Activated B cell treated with CpG ODN at 0.5 μM for 24 hours (primary cell): ENCODE measurements at regions of chr4 and their contacts with region 1.

Region 1: DNA sequence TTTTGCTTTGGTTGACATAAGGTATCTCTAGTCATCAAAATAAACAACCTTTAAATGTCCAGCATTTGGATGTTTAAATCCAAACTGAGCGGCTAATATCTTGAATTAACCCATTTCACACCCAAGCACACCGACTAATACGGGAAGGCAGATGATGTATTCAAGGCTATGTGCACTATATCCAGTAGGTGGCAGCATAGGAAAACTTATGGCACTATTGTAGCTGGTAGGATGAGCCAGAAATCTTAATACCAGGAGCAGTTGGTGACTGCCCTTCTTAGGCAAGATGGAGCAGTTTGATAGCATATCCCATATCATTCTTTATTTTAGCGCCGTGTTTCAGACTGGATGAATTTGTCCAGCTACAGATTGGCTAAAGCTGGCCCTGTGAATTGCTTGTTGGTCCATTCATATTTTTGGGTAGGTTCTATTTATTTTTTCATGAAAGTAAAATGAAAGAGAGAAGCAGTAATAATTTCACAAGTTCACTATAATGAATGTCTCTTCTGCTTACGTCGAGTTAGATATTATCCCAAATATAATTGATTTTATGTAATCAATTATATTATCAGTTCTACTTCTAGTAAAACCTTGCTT is 24.4 kb downstream of the UCHL1 start:
- DNase-seq: no peak
- ATAC-seq: peak; percentile 79
- H3K4me3 Mint-ChIP-seq: no peak overlapping the region
- H3K27ac Mint-ChIP-seq: no peak overlapping the region
- H3K4me1 Mint-ChIP-seq: no peaks in the 10 kb centered on the region
- H3K27me3 Mint-ChIP-seq: peaks cover 9% of the 10 kb centered on the region
- CTCF ChIP-seq: peak; percentile 90

Region 2: GRCh38 chr4:39987485-39987884 is 1293.7 kb before region 1 on chr4:
- CTCF ChIA-PET with region 1: no interaction called
- POLR2A ChIA-PET with region 1: no interaction called
- intact Hi-C with region 1: no loop called
- DNase-seq: no peak
- ATAC-seq: no peak
- H3K4me3 Mint-ChIP-seq: no peak overlapping the region
- H3K27ac Mint-ChIP-seq: no peak overlapping the region
- H3K4me1 Mint-ChIP-seq: no peaks in the 10 kb centered on the region
- H3K27me3 Mint-ChIP-seq: no peaks in the 10 kb centered on the region
- CTCF ChIP-seq: no peak

Region 3: DNA sequence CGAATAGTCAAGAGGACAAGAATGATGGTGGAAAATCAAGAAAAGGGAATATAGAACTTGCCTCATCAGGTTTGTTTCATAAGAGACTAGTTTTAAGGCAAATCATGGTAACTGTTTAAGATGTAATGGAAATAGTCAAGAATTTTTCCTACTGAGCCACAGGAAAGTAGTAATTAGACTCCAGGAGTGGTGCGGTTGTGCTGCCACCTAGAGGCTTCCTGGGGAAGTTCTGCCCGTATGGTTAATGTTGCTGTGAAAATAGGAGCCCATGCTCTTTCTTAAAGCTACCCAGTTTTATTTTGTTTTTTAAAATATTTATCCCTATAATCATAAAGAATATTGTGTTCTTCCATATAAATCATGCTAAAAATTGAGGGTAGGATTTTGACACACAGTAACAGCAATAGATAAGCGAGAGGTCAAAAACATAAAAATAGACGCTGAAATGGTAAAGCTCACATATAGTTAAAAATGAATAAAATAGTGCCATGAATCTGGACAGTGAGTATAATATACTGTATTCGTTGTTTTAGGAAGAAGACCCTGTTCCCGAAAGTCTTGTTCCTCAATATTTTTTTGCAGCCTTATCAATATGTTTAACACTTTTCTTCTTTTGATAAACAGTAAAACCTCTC is 380.4 kb after region 1 on chr4:
- CTCF ChIA-PET with region 1: interaction called, 86 read pairs
- POLR2A ChIA-PET with region 1: no interaction called
- intact Hi-C with region 1: loop called (anchors 1 kb)
- DNase-seq: no peak
- ATAC-seq: no peak
- H3K4me3 Mint-ChIP-seq: no peak overlapping the region
- H3K27ac Mint-ChIP-seq: no peak overlapping the region
- H3K4me1 Mint-ChIP-seq: no peaks in the 10 kb centered on the region
- H3K27me3 Mint-ChIP-seq: peaks cover 1% of the 10 kb centered on the region
- CTCF ChIP-seq: peak; percentile 75

Region 4: DNA sequence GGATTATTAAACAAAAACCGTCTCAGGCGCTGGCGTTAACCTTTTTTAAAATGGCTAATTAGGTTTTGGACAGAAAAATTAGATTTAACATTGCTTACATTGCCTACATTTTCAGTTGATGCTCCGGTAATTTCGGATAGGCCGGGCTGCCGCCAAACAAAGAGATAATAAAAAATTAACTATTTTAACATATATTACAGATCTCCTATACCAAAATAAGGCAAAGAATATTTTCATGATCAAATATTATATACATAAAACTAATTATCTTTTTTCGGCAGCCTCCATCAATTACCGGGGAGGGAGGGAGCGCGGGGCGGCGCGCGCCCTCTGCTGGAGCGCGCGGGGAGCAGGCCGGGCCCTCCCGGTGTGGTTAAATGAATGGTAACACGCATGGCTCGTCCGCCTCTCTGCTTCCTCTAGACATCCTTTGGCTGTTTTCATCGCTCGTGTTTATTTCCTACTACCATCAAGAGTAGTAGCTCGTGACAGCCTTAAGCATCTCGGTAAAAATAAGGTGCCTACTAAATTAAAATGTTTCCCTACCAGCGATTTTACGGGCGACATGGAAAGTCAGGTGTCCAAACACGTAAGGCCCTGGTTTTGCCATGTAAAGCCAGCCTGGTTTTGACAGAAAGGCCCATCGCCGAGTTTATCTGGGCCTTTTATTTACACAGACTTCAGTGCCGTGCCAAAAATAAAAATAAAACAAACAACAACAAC is 601.6 kb after region 1 on chr4:
- CTCF ChIA-PET with region 1: interaction called, 42 read pairs
- POLR2A ChIA-PET with region 1: no interaction called
- intact Hi-C with region 1: loop called (anchors 1 kb)
- DNase-seq: no peak
- ATAC-seq: peak; percentile 79
- H3K4me3 Mint-ChIP-seq: peak overlapping the region; percentile 57
- H3K27ac Mint-ChIP-seq: no peak overlapping the region
- H3K4me1 Mint-ChIP-seq: peaks cover 17% of the 10 kb centered on the region
- H3K27me3 Mint-ChIP-seq: peaks cover 54% of the 10 kb centered on the region
- CTCF ChIP-seq: peak; percentile 83

Region 5: GRCh38 chr4:41887821-41888686 is 606.9 kb after region 1 on chr4:
- CTCF ChIA-PET with region 1: interaction called, 42 read pairs
- POLR2A ChIA-PET with region 1: no interaction called
- intact Hi-C with region 1: loop called (anchors 1 kb)
- DNase-seq: no peak
- ATAC-seq: no peak
- H3K4me3 Mint-ChIP-seq: no peak overlapping the region
- H3K27ac Mint-ChIP-seq: no peak overlapping the region
- H3K4me1 Mint-ChIP-seq: peaks cover under 1% of the 10 kb centered on the region
- H3K27me3 Mint-ChIP-seq: peaks cover 33% of the 10 kb centered on the region
- CTCF ChIP-seq: peak; percentile 100

Region 6: DNA sequence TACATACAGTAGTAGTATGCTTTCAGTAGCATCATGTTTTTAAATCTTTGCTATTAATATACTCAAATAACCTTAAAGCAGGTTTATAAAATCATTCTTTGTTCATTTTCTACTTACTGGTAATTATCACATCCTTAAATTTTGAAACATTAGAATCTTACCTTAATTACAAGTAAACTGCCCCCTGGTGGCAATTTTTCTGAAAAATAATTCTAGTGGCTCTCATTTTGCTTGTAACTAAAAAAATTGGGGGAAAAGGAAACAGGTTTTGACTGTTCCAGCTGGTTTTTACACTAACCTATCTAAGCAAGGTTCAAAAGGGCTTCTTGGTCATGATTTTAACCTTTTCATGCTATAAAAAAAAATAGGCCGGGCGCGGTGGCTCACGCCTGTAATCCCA is 682.0 kb after region 1 on chr4:
- CTCF ChIA-PET with region 1: no interaction called
- POLR2A ChIA-PET with region 1: no interaction called
- intact Hi-C with region 1: loop called (anchors 10 kb)
- DNase-seq: no peak
- ATAC-seq: no peak
- H3K4me3 Mint-ChIP-seq: no peak overlapping the region
- H3K27ac Mint-ChIP-seq: no peak overlapping the region
- H3K4me1 Mint-ChIP-seq: no peaks in the 10 kb centered on the region
- H3K27me3 Mint-ChIP-seq: no peaks in the 10 kb centered on the region
- CTCF ChIP-seq: no peak

Region 7: GRCh38 chr4:42519803-42520417 is 1238.8 kb after region 1 on chr4:
- CTCF ChIA-PET with region 1: interaction called, 15 read pairs
- POLR2A ChIA-PET with region 1: no interaction called
- intact Hi-C with region 1: no loop called
- DNase-seq: no peak
- ATAC-seq: peak; percentile 42
- H3K4me3 Mint-ChIP-seq: no peak overlapping the region
- H3K27ac Mint-ChIP-seq: no peak overlapping the region
- H3K4me1 Mint-ChIP-seq: peaks cover 6% of the 10 kb centered on the region
- H3K27me3 Mint-ChIP-seq: no peaks in the 10 kb centered on the region
- CTCF ChIP-seq: peak; percentile 59